Cardiac septum (tissue), 1 donor: ENCODE measurements at regions of chr13 and their contacts with region 1.

Region 1: GRCh38 chr13:21670883-21671619 is at the start of gene FGF9:
- DNase-seq: peak; percentile 88
- total RNA-seq, gene FGF9: 14.3 TPM

Region 2: GRCh38 chr13:21528621-21529020 is 142.4 kb before region 1 on chr13:
- intact Hi-C with region 1: no loop called
- DNase-seq: no peak

Region 3: DNA sequence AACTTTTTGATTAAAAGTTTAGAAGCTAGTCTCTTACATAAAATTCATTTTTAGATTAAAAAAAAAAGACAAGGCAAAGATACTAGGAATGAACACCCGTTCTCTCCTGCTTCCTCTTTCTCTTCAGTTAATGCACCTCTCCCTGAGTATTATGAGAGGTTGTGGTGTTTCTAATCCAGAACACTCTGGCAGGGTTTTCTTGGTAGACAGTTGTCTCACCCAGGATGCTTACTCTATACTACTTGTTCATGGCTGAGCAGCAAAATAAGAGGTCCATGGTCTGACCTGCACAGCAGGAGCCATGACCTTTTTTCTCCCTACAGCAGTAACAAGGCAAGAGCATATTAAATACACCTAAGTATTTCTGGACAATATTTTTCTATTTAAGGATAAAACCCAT is 129.1 kb before region 1 on chr13:
- intact Hi-C with region 1: no loop called
- DNase-seq: no peak

Region 4: GRCh38 chr13:21603531-21604448 is 67.3 kb before region 1 on chr13 and contains the start of gene MICU2:
- intact Hi-C with region 1: loop called (anchors 5 kb)
- DNase-seq: peak; percentile 97
- total RNA-seq, gene MICU2: 48.8 TPM

Region 5: GRCh38 chr13:21761770-21762169 is 90.7 kb after region 1 on chr13:
- intact Hi-C with region 1: no loop called
- DNase-seq: no peak

Region 6: DNA sequence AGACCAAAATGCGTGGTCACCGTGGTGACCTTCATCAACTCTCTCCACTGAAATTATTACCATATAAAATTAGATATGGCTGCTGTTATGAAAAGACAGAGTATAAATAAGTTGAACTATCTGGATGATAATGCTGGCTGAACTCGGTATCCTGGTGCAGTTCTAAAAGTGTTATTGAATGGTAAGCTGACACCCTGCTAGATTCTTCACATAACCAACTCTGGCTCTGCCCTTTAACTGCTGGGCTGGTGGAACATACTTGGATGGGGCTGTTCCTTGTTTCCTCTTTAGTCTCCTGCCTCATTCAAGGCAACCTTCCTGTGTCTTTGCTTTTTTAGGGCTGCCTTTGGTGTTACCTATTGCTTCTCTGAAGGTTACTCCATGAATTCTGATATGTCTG is 106.8 kb after region 1 on chr13:
- intact Hi-C with region 1: loop called (anchors 10 kb)
- DNase-seq: no peak

Region 7: GRCh38 chr13:22357132-22357531 is 686.1 kb after region 1 on chr13:
- intact Hi-C with region 1: loop called (anchors 5 kb)
- DNase-seq: no peak

Region 8: DNA sequence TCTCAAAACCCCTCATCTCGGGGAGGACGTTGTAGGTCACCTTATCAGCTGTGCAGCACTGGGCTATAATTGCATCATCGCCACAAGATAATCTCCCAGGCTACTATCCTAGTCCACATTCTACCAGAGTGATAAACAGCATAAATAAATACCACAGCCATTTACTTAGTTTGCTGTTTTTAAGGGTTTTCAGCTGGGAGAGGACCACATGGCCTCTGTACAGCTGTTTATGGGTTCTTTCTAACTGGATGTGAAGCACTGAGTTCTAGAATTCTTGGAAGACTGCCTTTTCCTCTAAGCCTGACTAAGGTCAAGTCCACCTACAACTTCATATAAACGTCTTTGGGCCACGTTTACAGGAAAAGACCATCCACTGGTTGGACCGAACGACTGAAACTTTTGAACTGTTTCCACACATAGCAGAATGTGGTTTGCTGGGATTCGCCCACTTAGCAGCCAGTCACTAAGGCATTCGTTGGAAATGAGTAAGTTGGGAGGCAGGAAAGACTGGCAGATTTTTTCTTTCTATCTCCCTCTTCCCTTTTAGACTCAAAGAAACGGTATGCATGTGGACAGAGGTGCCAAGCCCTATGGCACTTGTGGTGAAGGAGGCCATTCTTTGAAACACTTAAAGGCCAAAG is 757.3 kb after region 1 on chr13:
- intact Hi-C with region 1: loop called (anchors 10 kb)
- DNase-seq: no peak

Region 9: GRCh38 chr13:22505489-22505888 is 834.4 kb after region 1 on chr13:
- intact Hi-C with region 1: no loop called
- DNase-seq: no peak